ENCODE measurements at regions of chrX and their contacts with region 1.

Region 1: DNA sequence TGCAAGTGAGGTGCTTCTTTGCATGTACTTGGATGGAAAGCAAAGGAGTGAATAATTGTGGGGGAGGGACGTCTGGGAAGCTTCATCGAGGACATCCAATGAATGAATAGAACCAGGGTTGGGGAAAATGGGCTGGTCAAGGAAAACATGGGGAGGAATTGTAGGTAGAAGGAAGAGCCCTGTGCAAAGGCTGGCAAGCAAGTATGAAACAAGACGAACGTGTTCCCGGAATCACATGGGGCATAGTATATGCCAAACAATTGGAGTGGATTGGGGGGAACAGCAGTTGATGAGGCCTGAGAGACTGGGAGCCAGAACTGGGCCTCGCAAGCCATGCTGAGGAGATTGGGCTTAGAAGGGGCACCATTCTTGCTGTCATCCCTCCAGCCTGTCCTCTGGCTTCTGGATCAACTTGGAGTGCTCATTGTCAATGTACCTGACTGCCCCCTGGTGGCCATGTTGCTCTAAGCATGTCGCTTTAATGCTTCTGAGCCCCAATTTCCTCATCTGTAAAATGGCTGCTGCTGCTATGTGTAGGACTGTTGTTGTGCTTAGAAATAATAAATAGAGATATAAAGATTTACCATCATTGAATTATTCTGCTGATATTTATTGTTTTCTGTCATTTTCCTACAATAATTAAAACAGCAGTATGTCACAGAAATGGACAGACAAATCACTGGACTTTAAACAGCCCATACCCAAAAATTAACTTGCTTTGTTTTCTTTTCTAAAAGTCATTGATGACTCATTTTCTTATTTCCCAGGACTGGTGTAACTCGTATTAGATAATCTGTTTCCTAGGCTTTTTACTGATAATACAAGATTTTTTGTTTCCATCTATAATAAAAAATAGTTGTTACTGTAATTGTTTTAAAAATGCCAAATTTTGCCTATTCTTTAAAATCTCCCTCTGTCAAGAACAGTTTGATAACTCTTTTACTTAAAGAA is 66.4 kb downstream of the JADE3 start:
- DNase-seq: peak; percentile 81
- H3K4me3 ChIP-seq: no peak overlapping the region
- H3K27ac ChIP-seq: no peak overlapping the region
- H3K4me1 ChIP-seq: no peaks in the 10 kb centered on the region
- H3K27me3 ChIP-seq: no peaks in the 10 kb centered on the region
- CTCF ChIP-seq: peak; percentile 51 to 62 (median 56)
- EP300 ChIP-seq: no peak
- POLR2A ChIP-seq: no peak

Region 2: GRCh38 chrX:46236411-46236810 is 742.2 kb before region 1 on chrX:
- in situ Hi-C with region 1: no loop called
- intact Hi-C with region 1: no loop called
- DNase-seq: no peak
- H3K4me3 ChIP-seq: no peak overlapping the region
- H3K27ac ChIP-seq: no peak overlapping the region
- H3K4me1 ChIP-seq: no peaks in the 10 kb centered on the region
- H3K27me3 ChIP-seq: no peaks in the 10 kb centered on the region
- CTCF ChIP-seq: no peak
- EP300 ChIP-seq: no peak
- POLR2A ChIP-seq: no peak

Region 3: DNA sequence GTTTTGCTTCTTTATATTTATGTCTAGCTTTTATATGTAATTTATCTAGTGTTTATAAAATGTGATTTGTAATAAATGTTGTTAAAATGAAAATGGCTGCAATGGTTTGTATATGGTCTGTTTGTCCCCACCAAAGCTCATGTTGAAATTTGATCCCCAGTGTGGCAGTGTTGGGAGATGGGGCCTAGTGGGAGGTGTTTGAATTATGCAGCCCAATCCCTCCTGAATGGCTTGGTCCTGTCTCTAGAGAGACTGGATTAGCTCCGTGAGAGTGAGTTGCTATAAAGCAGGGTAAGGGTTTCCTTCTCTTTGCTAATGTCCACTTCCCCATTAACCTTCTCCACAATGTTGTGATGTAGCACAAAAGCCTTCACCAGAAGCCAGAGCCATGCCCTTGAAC is 96.3 kb before region 1 on chrX:
- in situ Hi-C with region 1: loop called in 2 of 4 experiments (anchors 25 kb)
- intact Hi-C with region 1: no loop called
- DNase-seq: no peak
- H3K4me3 ChIP-seq: no peak overlapping the region
- H3K27ac ChIP-seq: no peak overlapping the region
- H3K4me1 ChIP-seq: no peaks in the 10 kb centered on the region
- H3K27me3 ChIP-seq: no peaks in the 10 kb centered on the region
- CTCF ChIP-seq: no peak
- EP300 ChIP-seq: no peak
- POLR2A ChIP-seq: no peak